Naive thymus-derived CD8-positive, alpha-beta T cell (primary cell): ENCODE measurements at regions of chr11 and their contacts with region 1.

Region 1: GRCh38 chr11:207208-207862 is at the starts of genes BET1L and RIC8A:
- DNase-seq: peak; percentile 90 to 99 (median 97)
- ATAC-seq: peak; percentile 76 to 86
- H3K4me3 Mint-ChIP-seq: peak within 1 kb of the TSS; percentile 86 to 99 (median 96)
- H3K27ac Mint-ChIP-seq: peak within 1 kb of the TSS; percentile 96 to 100 (median 99)
- H3K4me1 Mint-ChIP-seq: peaks cover 20 to 64% (median 62%) of the 10 kb centered on the region in 4 donors
- H3K27me3 Mint-ChIP-seq: no peaks in the 10 kb centered on the region
- polyA plus RNA-seq, gene BET1L: 24.0 to 75.2 (median 59.2) TPM
- polyA plus RNA-seq, gene RIC8A: 68.6 to 93.1 (median 76.7) TPM

Region 2: GRCh38 chr11:250740-251299 is 43.5 kb after region 1 on chr11:
- POLR2A ChIA-PET with region 1: interaction called, 19 read pairs
- DNase-seq: peak; percentile 74 to 91 (median 84)
- ATAC-seq: peak; percentile 99 to 100
- H3K4me3 Mint-ChIP-seq: peak overlapping the region in 2 of 10 donors; percentile 23 to 37
- H3K27ac Mint-ChIP-seq: peak overlapping the region in 9 of 10 donors; percentile 67 to 96 (median 88)
- H3K4me1 Mint-ChIP-seq: peaks cover 9 to 20% (median 10%) of the 10 kb centered on the region in 4 donors
- H3K27me3 Mint-ChIP-seq: no peaks in the 10 kb centered on the region

Region 3: DNA sequence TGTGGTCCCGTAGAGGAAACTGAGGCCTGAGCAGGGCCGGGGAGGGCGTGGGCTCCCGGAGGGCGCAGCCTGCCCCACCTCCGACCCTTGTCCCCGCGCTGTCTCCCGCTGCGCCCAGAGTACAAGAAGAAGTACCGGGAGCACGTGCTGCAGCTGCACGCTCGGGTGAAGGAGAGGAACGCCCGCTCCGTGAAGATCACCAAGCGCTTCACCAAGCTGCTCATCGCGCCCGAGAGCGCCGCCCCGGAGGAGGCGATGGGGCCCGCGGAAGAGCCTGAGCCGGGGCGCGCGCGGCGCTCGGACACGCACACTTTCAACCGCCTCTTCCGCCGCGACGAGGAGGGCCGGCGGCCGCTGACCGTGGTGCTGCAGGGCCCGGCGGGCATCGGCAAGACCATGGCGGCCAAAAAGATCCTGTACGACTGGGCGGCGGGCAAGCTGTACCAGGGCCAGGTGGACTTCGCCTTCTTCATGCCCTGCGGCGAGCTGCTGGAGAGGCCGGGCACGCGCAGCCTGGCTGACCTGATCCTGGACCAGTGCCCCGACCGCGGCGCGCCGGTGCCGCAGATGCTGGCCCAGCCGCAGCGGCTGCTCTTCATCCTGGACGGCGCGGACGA is 72.7 kb after region 1 on chr11:
- POLR2A ChIA-PET with region 1: interaction called, 78 read pairs
- DNase-seq: peak in 6 of 10 donors; percentile 44 to 83 (median 58)
- ATAC-seq: peak; percentile 51 to 65
- H3K4me3 Mint-ChIP-seq: peak overlapping the region; percentile 75 to 93 (median 89)
- H3K27ac Mint-ChIP-seq: peak overlapping the region in 7 of 10 donors; percentile 84 to 92 (median 88)
- H3K4me1 Mint-ChIP-seq: peaks cover 26 to 62% (median 53%) of the 10 kb centered on the region in 4 donors
- H3K27me3 Mint-ChIP-seq: peaks cover 0 to 14% (median 0%) of the 10 kb centered on the region in 5 donors

Region 4: GRCh38 chr11:335779-336658 is 128.7 kb after region 1 on chr11:
- POLR2A ChIA-PET with region 1: no interaction called
- DNase-seq: no peak
- ATAC-seq: peak in 1 of 2 donors; percentile 27
- H3K4me3 Mint-ChIP-seq: peak overlapping the region in 7 of 10 donors; percentile 12 to 75 (median 45)
- H3K27ac Mint-ChIP-seq: peak overlapping the region; percentile 10 to 88 (median 70)
- H3K4me1 Mint-ChIP-seq: peaks cover 24 to 62% (median 50%) of the 10 kb centered on the region in 4 donors
- H3K27me3 Mint-ChIP-seq: no peaks in the 10 kb centered on the region

Region 5: GRCh38 chr11:406978-407739 is 199.8 kb after region 1 on chr11:
- POLR2A ChIA-PET with region 1: interaction called, 33 read pairs
- DNase-seq: peak; percentile 62 to 98 (median 95)
- ATAC-seq: peak; percentile 90 to 95
- H3K4me3 Mint-ChIP-seq: peak overlapping the region in 7 of 10 donors; percentile 22 to 76 (median 58)
- H3K27ac Mint-ChIP-seq: peak overlapping the region in 9 of 10 donors; percentile 43 to 93 (median 79)
- H3K4me1 Mint-ChIP-seq: peaks cover 7 to 31% (median 15%) of the 10 kb centered on the region in 4 donors
- H3K27me3 Mint-ChIP-seq: no peaks in the 10 kb centered on the region

Region 6: GRCh38 chr11:447923-448731 is 240.8 kb after region 1 on chr11:
- POLR2A ChIA-PET with region 1: interaction called, 47 read pairs
- DNase-seq: peak; percentile 90 to 99 (median 94)
- ATAC-seq: peak; percentile 61 to 62
- H3K4me3 Mint-ChIP-seq: peak overlapping the region; percentile 84 to 93 (median 88)
- H3K27ac Mint-ChIP-seq: peak overlapping the region; percentile 87 to 99 (median 97)
- H3K4me1 Mint-ChIP-seq: peaks cover 11 to 35% (median 28%) of the 10 kb centered on the region in 4 donors
- H3K27me3 Mint-ChIP-seq: no peaks in the 10 kb centered on the region

Region 7: GRCh38 chr11:494761-495536 is 287.6 kb after region 1 on chr11:
- POLR2A ChIA-PET with region 1: no interaction called
- DNase-seq: no peak
- ATAC-seq: no peak
- H3K4me3 Mint-ChIP-seq: no peak overlapping the region
- H3K27ac Mint-ChIP-seq: peak overlapping the region in 4 of 10 donors; percentile 48 to 76 (median 64)
- H3K4me1 Mint-ChIP-seq: peaks cover 0 to 9% (median 4%) of the 10 kb centered on the region in 4 donors
- H3K27me3 Mint-ChIP-seq: no peaks in the 10 kb centered on the region

Region 8: DNA sequence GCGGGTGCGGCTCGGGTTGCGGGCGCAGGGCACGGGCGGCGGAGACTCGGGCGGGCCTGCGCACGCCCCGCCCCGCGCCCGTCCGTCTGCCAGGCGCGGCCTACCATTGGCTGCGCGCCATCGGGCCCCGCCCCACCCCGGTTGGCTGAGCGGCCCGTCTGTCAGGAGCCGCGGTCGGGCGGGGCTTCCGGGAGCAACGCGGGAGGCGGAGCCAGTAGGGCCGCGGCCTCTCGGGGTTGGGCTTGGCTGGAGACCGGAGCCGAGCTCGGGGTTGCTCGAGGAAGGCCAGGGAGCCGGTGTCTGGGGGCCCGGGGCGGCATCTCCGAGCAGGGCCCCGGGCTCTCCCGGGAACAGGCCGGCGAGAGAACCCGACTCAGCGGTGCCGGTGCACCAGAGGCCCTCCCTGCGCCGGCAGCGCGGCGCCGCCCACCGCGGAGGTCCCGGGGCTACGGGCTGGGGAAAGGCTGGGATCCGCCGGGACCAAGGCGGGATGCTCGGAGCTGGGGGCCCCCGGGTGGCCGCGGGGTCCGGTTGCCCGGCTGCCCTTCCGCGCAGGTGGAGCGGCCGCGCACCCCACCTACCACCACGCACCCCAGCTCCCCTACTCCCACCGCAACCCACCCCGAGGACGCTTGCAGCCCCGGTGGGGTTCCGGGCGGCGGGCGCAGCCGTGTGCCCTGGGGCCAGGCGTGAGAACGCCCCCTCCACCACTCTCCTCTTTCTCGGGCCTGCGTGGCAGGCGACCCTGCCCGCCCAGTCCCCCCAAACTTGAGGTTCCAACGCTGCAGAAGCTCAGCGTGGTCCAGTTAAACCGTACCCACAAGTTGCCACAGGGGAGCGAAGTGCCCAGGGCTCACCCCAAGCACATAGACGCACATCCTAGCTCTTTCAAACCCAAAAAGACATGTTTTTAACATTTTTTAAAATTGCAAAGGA is 328.5 kb after region 1 on chr11 and contains the start of gene HRAS:
- POLR2A ChIA-PET with region 1: interaction called, 11 read pairs
- DNase-seq: peak; percentile 90 to 98 (median 96)
- ATAC-seq: peak; percentile 72 to 79
- H3K4me3 Mint-ChIP-seq: peak within 1 kb of the TSS; percentile 85 to 97 (median 96)
- H3K27ac Mint-ChIP-seq: peak within 1 kb of the TSS; percentile 89 to 99 (median 98)
- H3K4me1 Mint-ChIP-seq: peaks cover 2 to 25% (median 18%) of the 10 kb centered on the region in 4 donors
- H3K27me3 Mint-ChIP-seq: no peaks in the 10 kb centered on the region
- polyA plus RNA-seq, gene HRAS: 8.6 to 26.7 (median 15.3) TPM